Posterior vena cava (tissue), 2 donors: ENCODE measurements at regions of chrX and their contacts with region 1.

Region 1: GRCh38 chrX:21839334-21840192 is at the start of gene MBTPS2:
- DNase-seq: peak; percentile 94
- total RNA-seq, gene MBTPS2: 11.8 to 14.1 TPM

Region 2: GRCh38 chrX:20418379-20419150 is 1421.0 kb before region 1 on chrX:
- intact Hi-C with region 1: no loop called
- DNase-seq: no peak

Region 3: DNA sequence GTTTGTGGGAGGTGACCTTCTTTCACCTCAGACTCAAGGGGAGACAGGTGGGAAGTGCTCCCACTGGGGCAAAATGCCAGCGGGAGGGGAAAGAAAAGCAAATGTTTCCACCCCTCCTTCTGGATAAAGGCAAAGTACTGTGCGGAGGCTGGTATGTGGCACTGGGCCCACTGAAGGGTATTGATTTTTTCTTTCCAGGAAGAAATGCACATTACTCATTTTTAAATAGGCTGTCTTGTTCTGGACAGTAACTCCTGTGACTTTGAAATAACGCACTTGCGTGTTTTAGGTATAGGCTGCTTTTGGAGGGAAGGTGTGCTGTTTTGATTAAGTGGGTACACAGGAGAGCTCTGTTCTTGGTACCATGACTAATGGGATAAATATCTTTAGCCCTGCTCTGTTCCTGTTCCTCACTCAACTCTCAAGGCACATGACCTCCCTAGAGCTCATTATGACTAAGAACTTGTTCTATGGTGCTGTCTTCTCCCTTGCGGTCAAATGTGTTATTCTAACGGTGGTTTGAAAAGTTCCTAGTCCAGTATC is 40.8 kb before region 1 on chrX:
- intact Hi-C with region 1: no loop called
- DNase-seq: no peak

Region 4: DNA sequence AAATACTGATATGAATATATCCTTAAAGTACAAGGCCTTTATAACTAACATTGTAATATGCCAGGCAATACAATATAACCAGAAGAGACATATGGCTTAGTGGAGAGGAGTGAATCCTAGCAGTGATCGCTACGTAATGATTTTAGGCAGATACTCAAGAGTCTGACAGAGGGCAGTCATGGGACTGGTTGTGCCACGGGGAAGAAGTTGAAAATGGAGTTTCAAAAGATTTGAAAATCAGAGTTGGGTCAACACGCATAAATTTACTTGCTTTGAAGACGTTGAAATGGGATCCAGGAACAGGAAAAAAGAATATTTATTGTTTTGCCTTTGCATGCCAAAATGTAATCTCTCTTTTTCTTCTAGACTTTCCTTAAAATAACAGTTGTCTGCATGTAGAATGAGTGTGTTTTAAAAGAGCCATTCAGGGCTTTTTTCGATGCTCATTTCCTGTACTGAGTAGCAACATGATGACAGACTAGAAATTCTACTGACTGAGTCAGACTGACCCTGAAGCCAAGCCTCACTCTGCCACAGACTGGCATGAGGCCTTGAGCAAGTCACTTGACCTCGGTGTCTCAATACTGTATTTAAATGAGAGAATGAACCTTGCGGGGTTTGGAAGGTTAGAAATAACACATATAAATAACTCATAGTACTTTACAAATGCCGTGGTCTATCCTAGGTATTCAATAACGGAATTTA is 92.9 kb after region 1 on chrX:
- intact Hi-C with region 1: loop called in 1 of 2 experiments (anchors 10 kb)
- DNase-seq: no peak

Region 5: DNA sequence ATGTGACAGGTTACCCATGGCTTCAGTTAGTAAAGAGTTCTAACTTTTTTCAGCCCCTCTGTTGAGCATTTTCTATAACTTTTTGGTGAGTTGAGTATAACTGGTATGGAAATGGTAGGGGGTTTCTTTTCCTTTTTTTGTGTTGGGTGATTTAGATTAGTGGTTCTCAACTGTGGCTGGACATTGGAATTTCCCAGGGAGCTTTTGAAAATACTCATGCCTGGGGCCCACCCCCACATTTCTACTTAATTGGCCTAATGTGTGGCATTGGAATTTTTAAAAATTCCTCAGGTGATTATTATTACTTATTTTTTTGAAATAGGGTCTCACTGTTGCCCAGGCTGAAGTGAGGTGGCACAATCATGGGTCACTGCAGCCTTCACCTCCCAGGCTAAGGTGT is 122.8 kb after region 1 on chrX:
- intact Hi-C with region 1: no loop called
- DNase-seq: no peak

Region 6: GRCh38 chrX:21972721-21973120 is 133.2 kb after region 1 on chrX:
- intact Hi-C with region 1: loop called (anchors 5 to 10 kb)
- DNase-seq: no peak